K562 (cell line): ENCODE measurements at regions of chr22 and their contacts with region 1.

Region 1: DNA sequence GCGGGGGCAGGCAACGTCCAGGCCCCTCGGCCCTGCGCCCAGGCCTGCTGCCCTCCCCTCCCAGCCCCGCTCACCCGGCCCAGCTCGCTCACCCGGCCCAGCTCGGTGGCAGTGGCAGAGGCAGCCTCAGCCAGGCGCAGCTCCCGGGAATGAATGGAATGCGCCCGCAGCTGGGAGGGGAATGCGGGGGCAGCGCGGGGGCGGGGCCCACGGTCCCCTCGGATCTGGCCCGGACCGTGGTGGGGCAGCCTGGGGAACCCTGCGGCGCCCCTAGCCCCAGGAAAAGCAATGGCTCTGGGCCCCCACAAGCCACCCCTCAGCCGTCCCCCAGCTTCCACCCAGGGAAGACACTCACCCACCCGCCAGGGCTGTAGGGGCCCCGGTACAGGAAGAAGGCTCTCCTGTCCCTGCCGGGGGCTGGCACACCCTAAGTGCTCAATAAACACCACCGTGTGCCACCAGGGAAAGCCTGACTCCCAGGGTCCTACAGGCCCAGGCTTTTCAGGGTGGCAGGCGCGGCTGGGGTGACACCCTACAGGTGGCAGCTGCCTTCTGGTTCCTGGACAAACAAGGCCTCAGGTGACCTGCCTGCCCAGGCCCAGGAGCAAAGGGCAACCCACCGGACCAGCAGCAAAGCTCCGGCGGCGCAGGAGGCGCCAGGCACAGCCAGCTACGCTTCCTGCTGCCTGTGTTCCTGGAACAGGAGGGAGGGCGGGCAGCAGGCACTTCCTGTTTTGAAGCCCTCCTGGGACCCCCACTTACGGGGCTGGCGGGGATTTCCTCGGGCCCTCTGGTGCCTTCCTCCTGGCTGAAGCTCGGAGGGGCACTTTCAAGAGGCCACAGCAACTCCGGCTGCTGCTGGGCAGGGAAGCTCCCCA is 13.8 kb downstream of the PLXNB2 start:
- DNase-seq: no peak
- ATAC-seq: no peak
- H3K4me3 ChIP-seq: no peak overlapping the region
- H3K27ac ChIP-seq: no peak overlapping the region
- H3K4me1 ChIP-seq: peaks cover 0 to 37% of the 10 kb centered on the region in 2 experiments; a peak in 2 of 5 replicates
- H3K27me3 ChIP-seq: no peaks in the 10 kb centered on the region
- CTCF ChIP-seq: no peak
- EP300 ChIP-seq: no peak
- POLR2A ChIP-seq: no peak
- RAD21 ChIP-seq: no peak

Region 2: DNA sequence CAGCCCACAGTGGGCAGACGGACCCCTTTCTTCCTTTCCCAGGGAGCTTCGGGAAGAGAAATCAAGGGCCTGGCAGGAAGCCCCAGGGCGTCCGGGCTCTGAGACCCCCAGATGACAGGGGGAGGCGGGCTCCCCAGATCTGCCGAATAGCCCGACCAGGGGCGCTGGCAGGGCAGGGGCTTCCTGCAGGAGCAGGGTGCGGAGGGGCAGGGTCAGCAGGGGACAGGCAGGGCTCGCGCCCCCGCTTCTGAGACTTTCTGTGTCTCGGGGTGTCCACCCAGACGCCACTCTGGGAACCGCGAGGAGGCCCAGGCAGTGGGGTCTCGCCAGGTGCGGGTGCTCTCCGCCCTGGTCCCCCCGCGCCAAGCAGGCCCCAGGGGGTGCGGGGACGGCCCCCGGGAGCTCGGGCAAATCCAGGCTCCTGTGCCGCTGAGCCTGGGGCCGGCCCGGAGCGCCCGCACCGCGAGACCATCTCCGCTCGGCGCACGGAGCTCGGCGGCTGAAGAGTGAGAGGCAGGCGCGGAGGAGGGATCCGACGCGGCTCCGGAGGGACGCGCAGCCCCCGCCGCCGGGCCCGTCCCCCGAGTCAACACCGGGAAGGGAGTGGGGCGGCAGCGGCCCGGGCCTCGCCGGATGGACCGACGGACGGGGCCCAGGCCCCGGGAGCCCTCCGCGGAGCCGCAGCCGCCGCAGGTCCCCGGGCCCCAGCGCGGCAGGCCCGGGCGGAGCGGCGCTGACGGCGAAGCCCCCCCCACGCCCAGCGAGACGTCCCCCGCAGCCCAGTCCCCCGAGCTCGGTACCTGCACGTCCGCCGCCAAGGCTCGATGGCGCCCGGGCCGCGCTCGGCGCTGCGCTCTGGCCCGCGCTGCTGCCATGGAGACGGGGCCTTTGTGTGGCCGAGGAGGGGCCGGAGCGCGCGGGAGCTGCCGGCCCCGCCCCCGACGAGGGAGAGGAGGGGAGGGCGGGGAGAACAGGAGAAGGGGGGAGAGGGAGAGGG is 13.4 kb after region 1 on chr22 and contains the start of gene PLXNB2:
- CTCF ChIA-PET with region 1: no interaction called
- POLR2A ChIA-PET with region 1: interaction called, 11 read pairs
- in situ Hi-C with region 1: no loop called
- intact Hi-C with region 1: no loop called
- DNase-seq: peak; percentile 80 to 87 (median 84)
- ATAC-seq: peak; percentile 68
- H3K4me3 ChIP-seq: peak within 1 kb of the TSS; percentile 59
- H3K27ac ChIP-seq: peak within 1 kb of the TSS; percentile 74
- H3K4me1 ChIP-seq: peaks cover 34 to 91% of the 10 kb centered on the region in 2 experiments
- H3K27me3 ChIP-seq: no peaks in the 10 kb centered on the region
- CTCF ChIP-seq: no peak
- EP300 ChIP-seq: no peak
- POLR2A ChIP-seq: no peak
- RAD21 ChIP-seq: no peak
- polyA plus RNA-seq, gene PLXNB2: 0.15 to 0.81 TPM